Posterior vena cava (tissue), 2 donors: ENCODE measurements at regions of chr12 and their contacts with region 1.

Region 1: GRCh38 chr12:91009319-91009950 is 4.7 kb upstream of the EPYC start:
- DNase-seq: no peak

Region 2: DNA sequence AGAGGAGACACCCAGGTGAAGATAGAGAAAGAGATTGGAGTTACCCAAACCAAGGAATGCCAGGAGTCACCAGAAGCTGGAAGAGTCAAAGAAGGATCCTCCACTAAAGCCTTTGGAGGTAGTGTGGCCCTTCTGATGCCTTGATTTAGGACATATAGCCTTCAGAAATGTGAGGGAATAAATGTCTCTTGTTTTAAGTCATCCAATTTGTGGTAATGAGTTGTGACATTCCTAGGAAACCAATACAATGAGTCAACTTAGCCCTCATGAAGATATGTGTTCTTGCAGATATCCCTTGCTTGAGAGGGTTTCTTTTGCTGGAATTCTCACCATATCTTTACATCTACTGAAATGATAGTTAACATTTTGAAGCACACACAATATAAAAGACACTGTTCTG is 113.3 kb before region 1 on chr12:
- intact Hi-C with region 1: no loop called
- DNase-seq: no peak

Region 3: GRCh38 chr12:90978117-90978770 is 31.2 kb before region 1 on chr12:
- intact Hi-C with region 1: loop called in 1 of 2 experiments (anchors 1 kb)
- DNase-seq: no peak